HEK293 (cell line): ENCODE measurements at regions of chr6 and their contacts with region 1.

Region 1: DNA sequence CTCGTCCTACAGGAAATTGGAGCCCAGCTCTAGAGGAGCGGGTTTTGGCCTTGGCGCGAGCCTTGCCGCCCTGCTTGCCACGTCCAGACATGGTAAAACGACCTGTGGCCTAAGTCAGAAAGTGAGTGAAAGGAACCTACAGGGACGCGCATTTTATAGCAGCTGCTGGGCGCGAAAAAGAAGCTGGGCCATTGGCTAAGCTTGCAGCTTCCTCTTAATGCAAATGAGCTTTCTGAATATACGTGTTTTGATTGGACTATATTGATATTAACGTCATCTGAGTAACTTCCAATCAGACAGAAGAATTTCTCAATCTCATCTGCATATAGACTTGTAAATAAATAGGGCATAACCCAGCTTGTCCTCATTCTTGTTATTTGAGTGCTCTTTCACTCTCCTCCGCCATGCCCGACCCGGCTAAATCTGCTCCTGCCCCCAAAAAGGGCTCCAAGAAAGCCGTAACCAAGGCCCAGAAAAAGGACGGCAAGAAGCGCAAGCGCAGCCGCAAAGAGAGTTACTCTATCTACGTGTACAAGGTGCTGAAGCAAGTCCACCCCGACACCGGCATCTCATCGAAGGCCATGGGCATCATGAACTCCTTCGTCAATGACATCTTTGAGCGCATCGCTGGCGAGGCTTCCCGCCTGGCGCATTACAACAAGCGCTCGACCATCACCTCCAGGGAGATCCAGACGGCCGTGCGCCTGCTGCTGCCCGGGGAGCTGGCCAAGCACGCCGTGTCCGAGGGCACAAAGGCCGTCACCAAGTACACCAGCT is 18.9 kb downstream of the OR2B2 start:
- H3K4me3 ChIP-seq: peak overlapping the region; percentile 56
- H3K27ac ChIP-seq: peak overlapping the region; percentile 67; the same call in 1 of the 2 replicates
- H3K4me1 ChIP-seq: no peaks in the 10 kb centered on the region
- CTCF ChIP-seq: no peak

Region 2: DNA sequence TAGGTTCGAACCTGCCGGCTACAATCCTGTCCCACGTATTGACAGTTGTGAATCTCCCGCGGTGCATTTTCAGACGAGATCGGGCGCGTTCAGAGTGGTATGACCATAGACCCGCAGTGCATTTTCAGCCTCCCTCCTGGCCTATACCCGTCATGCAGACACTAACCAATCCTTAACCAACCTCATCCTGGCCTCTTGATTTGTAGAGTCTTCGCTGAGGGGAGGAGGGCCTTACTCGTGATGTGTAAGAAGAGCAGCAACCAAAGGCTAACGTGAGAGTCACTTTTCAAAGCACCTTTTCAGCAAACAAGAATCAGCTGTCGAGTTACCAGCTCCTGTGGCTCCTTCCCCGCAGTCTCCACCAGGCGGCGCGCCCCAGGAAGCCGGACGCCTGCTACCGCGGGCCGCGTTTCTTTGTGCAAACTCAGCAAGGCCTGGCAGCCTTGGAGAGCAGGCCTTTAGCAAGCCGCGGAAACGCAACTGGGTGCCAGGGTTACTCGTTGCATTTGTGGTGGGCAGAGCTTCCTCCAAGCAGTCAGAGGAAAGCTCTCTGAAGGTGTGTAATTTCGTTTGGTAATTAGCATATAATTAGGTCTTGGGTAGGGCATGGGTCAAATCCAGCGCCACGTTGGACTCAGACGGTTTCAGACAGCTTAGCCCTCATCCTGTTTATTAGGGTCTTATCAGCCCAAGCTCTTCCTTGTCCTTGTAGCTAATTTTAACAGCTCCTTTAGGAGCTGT is 120.8 kb before region 1 on chr6:
- CTCF ChIA-PET with region 1: interaction called, 34 read pairs
- POLR2A ChIA-PET with region 1: interaction called, 19 read pairs
- H3K4me3 ChIP-seq: peak overlapping the region; percentile 21
- H3K27ac ChIP-seq: peak overlapping the region; percentile 40
- H3K4me1 ChIP-seq: no peaks in the 10 kb centered on the region
- CTCF ChIP-seq: peak; percentile 95

Region 3: DNA sequence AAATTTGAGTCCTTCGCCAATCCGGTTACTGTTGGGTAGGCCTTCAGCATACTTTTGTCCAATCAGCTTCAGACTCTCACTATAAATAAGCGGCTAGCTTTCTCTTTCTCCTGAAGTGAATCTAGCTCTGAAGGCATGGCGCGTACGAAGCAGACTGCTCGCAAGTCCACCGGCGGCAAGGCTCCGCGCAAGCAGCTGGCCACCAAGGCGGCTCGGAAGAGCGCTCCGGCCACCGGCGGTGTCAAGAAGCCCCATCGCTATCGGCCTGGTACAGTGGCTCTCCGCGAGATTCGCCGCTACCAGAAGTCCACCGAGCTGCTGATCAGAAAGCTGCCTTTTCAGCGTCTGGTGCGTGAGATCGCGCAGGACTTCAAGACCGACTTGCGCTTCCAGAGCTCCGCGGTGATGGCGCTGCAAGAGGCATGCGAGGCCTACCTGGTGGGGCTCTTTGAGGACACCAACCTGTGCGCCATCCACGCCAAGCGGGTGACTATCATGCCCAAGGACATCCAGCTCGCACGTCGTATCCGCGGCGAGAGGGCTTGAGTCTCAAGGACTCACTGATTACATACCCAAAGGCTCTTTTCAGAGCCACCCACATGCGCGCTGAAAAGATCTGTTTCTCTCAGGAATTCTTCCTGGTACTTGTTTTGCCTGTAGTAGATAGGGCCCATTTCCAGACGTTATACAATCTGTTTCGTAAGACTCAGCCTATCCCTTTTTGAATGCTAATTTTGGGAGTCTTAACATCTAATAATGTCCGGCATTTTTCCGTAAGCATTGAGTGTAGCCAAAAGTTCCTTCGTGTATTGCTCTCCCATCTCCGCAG is 83.1 kb before region 1 on chr6:
- CTCF ChIA-PET with region 1: interaction called, 8 read pairs
- POLR2A ChIA-PET with region 1: interaction called, 179 read pairs
- H3K4me3 ChIP-seq: peak overlapping the region; percentile 87
- H3K27ac ChIP-seq: peak overlapping the region; percentile 77
- H3K4me1 ChIP-seq: peaks cover 5% of the 10 kb centered on the region; the same call in 1 of the 2 replicates
- CTCF ChIP-seq: peak; percentile 9; the same call in 1 of the 2 replicates

Region 4: GRCh38 chr6:27864906-27865849 is 28.1 kb before region 1 on chr6:
- CTCF ChIA-PET with region 1: interaction called, 7 read pairs
- POLR2A ChIA-PET with region 1: interaction called, 110 read pairs
- H3K4me3 ChIP-seq: peak overlapping the region; percentile 78
- H3K27ac ChIP-seq: peak overlapping the region; percentile 63
- H3K4me1 ChIP-seq: no peaks in the 10 kb centered on the region
- CTCF ChIP-seq: no peak

Region 5: DNA sequence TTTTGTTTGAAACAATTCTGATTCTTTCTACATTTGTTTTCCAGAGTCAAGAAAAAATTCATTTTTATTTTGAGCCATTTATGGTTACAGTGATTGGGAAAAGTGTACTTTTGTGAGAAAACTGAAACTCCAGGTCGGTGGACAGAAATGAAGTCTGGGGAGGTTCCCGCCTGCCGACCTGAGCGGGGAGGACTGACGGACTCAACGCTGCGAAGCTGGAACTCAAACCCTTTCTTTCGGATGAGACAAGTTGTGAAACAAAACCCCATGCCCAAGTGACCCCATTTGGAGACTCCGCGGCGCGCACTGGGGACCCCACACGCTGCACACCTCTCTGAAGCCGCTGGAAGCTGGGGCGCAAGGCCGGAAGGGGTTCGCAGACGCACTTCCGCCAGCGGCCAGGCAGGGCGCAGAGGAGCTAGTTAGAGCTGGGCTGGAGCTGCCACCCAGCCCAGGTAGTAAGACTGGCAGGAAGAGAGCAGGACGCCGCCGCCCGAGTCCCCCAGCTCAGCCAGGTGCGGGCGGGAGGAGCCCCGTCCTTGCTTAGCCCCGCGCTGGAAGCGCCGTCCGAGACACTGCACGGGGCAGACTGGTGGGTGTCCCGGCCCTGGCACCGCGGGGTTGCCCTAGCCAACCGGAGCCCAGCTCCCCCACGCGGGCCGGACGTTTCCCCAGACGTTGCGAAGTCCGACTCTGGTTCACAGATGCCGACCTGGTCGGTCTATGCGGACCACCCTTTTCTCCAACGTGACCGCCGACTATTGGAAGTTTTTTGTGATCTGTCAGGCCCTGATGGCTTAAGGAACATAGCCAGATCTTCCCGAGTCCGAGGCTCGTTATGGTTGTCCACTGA is 211.4 kb after region 1 on chr6:
- CTCF ChIA-PET with region 1: no interaction called
- POLR2A ChIA-PET with region 1: interaction called, 10 read pairs
- H3K4me3 ChIP-seq: peak overlapping the region; percentile 62
- H3K27ac ChIP-seq: peak overlapping the region; percentile 78
- H3K4me1 ChIP-seq: no peaks in the 10 kb centered on the region
- CTCF ChIP-seq: peak; percentile 95